HCT116 (cell line): ENCODE measurements at regions of chr17 and their contacts with region 1.

Region 1: GRCh38 chr17:9522074-9522473 is 53.5 kb downstream of the STX8 start:
- DNase-seq: no peak
- ATAC-seq: peak; percentile 81
- H3K4me3 ChIP-seq: no peak overlapping the region
- H3K27ac ChIP-seq: no peak overlapping the region
- H3K4me1 ChIP-seq: no peaks in the 10 kb centered on the region; a peak in 1 of 4 replicates
- H3K27me3 ChIP-seq: no peaks in the 10 kb centered on the region
- CTCF ChIP-seq: peak; percentile 31 to 62 (median 59)
- POLR2A ChIP-seq: no peak
- RAD21 ChIP-seq: peak; percentile 78

Region 2: GRCh38 chr17:8753976-8754440 is 768.1 kb before region 1 on chr17:
- CTCF ChIA-PET with region 1: interaction called, 3 read pairs
- POLR2A ChIA-PET with region 1: no interaction called
- RAD21 ChIA-PET with region 1: no interaction called
- intact Hi-C with region 1: loop called (anchors 5 kb)
- DNase-seq: peak; percentile 31
- ATAC-seq: peak; percentile 88
- H3K4me3 ChIP-seq: no peak overlapping the region
- H3K27ac ChIP-seq: no peak overlapping the region
- H3K4me1 ChIP-seq: no peaks in the 10 kb centered on the region
- H3K27me3 ChIP-seq: no peaks in the 10 kb centered on the region
- CTCF ChIP-seq: peak; percentile 50 to 73 (median 60); a peak in 5 of 6 replicates
- POLR2A ChIP-seq: no peak
- RAD21 ChIP-seq: peak; percentile 55; the same call in 1 of the 2 replicates

Region 3: DNA sequence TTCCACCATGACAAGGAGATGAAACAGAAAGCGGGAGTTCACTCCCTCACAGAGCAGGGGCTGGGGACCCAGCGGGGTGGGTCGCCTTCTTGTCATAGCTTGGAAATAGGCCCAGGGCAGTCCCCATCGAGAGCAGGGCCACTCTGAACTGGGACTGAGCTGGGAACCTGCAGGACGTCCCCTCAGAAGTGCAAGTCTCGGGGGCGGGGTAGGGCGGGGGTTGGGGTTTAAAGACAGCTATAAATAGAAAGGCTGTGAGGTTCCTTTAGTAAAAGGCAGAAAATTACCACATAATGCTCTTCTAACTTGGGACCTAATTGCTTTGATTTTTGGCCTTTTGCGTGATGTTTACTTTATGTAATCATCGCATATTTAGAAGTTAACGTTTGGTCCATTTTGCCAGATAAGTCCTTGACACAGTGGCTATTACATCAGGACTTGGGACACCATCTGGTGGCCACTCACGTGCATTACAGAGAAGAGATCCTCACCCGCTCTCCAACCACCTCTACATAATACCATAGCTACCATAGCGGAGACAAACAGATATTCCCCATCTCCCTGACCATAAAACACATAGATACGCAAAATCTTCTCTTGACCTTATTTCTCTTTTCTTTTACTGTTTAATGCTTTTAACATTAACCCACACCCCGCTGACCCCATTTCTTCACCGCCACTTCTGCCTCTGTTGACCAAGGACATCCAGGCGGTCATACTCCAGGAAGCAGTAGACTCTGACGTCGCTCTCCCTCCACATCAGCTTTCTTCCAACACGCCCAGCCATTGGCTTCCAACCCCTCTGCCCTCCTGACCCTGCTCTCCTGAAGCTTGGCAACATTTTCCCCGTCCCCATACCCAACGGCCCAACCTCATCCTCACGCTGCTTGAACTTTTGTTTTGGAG is 627.1 kb before region 1 on chr17:
- CTCF ChIA-PET with region 1: no interaction called
- POLR2A ChIA-PET with region 1: no interaction called
- RAD21 ChIA-PET with region 1: no interaction called
- intact Hi-C with region 1: loop called (anchors 10 kb)
- DNase-seq: peak; percentile 39
- ATAC-seq: peak; percentile 93
- H3K4me3 ChIP-seq: no peak overlapping the region
- H3K27ac ChIP-seq: no peak overlapping the region
- H3K4me1 ChIP-seq: peaks cover 0 to 5% of the 10 kb centered on the region in 2 experiments; a peak in 1 of 4 replicates
- H3K27me3 ChIP-seq: no peaks in the 10 kb centered on the region
- CTCF ChIP-seq: peak; percentile 57 to 80 (median 77); a peak in 5 of 6 replicates
- POLR2A ChIP-seq: no peak
- RAD21 ChIP-seq: peak; percentile 80

Region 4: GRCh38 chr17:8991514-8992285 is 530.4 kb before region 1 on chr17:
- CTCF ChIA-PET with region 1: interaction called, 11 read pairs
- POLR2A ChIA-PET with region 1: no interaction called
- RAD21 ChIA-PET with region 1: no interaction called
- intact Hi-C with region 1: loop called (anchors 1 kb)
- DNase-seq: peak; percentile 51
- ATAC-seq: peak; percentile 87
- H3K4me3 ChIP-seq: no peak overlapping the region
- H3K27ac ChIP-seq: no peak overlapping the region
- H3K4me1 ChIP-seq: no peaks in the 10 kb centered on the region
- H3K27me3 ChIP-seq: no peaks in the 10 kb centered on the region
- CTCF ChIP-seq: peak; percentile 64 to 92 (median 90)
- POLR2A ChIP-seq: no peak
- RAD21 ChIP-seq: peak; percentile 80

Region 5: DNA sequence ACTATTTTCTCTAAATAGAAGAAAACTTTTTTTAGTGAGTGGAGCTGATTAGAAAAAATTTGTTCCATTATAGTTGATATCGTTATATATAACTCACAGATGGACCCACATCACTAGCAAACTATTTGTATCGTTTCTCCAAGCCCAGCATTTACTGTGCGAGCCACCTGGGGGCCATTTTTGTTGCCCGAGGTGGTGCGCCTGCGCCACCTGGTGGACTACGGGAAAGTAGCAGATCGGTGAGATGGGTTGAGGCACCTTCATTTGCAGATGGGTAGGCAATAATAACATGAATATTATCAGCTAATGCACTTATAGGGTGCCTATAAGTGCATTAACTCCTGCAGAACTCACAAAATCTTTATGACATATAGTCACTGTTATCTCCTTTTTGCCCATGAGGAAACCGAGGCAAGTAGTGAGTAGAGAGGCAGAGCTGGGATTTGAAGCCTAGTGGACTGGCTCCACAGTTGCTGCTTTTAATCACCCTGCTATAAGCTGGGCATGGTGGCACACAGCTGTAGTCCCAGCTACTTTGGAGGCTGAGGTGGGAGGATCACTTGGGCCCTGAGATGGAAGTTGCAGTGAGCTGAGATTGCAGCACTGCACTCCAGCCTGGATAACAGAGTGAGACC is 524.0 kb before region 1 on chr17:
- CTCF ChIA-PET with region 1: interaction called, 39 read pairs
- POLR2A ChIA-PET with region 1: no interaction called
- RAD21 ChIA-PET with region 1: no interaction called
- intact Hi-C with region 1: loop called (anchors 1 kb)
- DNase-seq: peak; percentile 51
- ATAC-seq: peak; percentile 88
- H3K4me3 ChIP-seq: no peak overlapping the region
- H3K27ac ChIP-seq: no peak overlapping the region
- H3K4me1 ChIP-seq: peaks cover 0 to 4% of the 10 kb centered on the region in 2 experiments; a peak in 1 of 4 replicates
- H3K27me3 ChIP-seq: no peaks in the 10 kb centered on the region
- CTCF ChIP-seq: peak; percentile 98
- POLR2A ChIP-seq: no peak
- RAD21 ChIP-seq: peak; percentile 82

Region 6: DNA sequence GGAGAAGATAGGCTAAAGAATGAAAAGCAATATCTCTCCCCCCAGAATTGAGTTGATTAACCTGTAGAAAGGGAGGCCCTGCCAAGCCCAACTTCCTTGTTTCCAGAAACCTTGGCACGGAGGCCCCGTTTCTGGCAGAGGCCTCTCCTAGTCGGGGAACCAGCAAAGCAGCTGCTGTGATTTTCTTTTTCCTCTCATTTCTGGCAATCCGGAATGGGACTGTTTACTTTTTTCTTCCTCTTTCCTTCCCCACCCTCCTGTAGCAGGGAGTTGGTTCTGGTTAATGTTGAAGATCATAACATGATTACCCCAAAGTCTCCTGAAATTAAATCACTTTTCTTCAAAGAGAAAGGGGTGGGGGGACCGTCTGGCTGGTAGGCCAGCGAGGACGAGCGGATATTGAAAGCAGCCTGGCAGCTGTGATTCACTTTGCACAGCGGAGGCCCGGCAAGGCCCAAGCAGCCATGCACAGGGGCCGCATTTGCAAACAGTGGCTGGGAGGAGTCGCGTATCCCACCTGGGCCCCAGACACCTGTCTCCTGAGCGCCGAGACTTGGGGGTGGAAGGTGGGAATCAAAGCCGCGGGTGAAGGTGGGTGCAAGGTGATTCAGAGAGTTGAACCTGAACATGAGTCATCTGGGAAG is 449.3 kb before region 1 on chr17:
- CTCF ChIA-PET with region 1: no interaction called
- POLR2A ChIA-PET with region 1: no interaction called
- RAD21 ChIA-PET with region 1: no interaction called
- intact Hi-C with region 1: no loop called
- DNase-seq: no peak
- ATAC-seq: no peak
- H3K4me3 ChIP-seq: no peak overlapping the region
- H3K27ac ChIP-seq: no peak overlapping the region
- H3K4me1 ChIP-seq: peaks cover 5 to 27% of the 10 kb centered on the region in 2 experiments; a peak in 2 of 4 replicates
- H3K27me3 ChIP-seq: no peaks in the 10 kb centered on the region
- CTCF ChIP-seq: no peak
- POLR2A ChIP-seq: no peak
- RAD21 ChIP-seq: no peak

Region 7: GRCh38 chr17:9115446-9116191 is 406.5 kb before region 1 on chr17:
- CTCF ChIA-PET with region 1: no interaction called
- POLR2A ChIA-PET with region 1: no interaction called
- RAD21 ChIA-PET with region 1: no interaction called
- intact Hi-C with region 1: no loop called
- DNase-seq: no peak
- ATAC-seq: peak; percentile 40; the same call in 1 of the 2 replicates
- H3K4me3 ChIP-seq: no peak overlapping the region
- H3K27ac ChIP-seq: no peak overlapping the region
- H3K4me1 ChIP-seq: no peaks in the 10 kb centered on the region
- H3K27me3 ChIP-seq: no peaks in the 10 kb centered on the region
- CTCF ChIP-seq: no peak
- POLR2A ChIP-seq: no peak
- RAD21 ChIP-seq: 0 out of 2 replicates have a peak, but pooled peaks have one; percentile 3

Region 8: GRCh38 chr17:9291912-9292560 is 230.0 kb before region 1 on chr17:
- CTCF ChIA-PET with region 1: interaction called, 8 read pairs
- POLR2A ChIA-PET with region 1: no interaction called
- RAD21 ChIA-PET with region 1: no interaction called
- intact Hi-C with region 1: loop called (anchors 2 kb)
- DNase-seq: no peak
- ATAC-seq: peak; percentile 95
- H3K4me3 ChIP-seq: no peak overlapping the region
- H3K27ac ChIP-seq: no peak overlapping the region
- H3K4me1 ChIP-seq: peaks cover 0 to 8% of the 10 kb centered on the region in 2 experiments; a peak in 1 of 4 replicates
- H3K27me3 ChIP-seq: no peaks in the 10 kb centered on the region
- CTCF ChIP-seq: peak; percentile 34 to 75 (median 74); a peak in 5 of 6 replicates
- POLR2A ChIP-seq: no peak
- RAD21 ChIP-seq: peak; percentile 68

Region 9: DNA sequence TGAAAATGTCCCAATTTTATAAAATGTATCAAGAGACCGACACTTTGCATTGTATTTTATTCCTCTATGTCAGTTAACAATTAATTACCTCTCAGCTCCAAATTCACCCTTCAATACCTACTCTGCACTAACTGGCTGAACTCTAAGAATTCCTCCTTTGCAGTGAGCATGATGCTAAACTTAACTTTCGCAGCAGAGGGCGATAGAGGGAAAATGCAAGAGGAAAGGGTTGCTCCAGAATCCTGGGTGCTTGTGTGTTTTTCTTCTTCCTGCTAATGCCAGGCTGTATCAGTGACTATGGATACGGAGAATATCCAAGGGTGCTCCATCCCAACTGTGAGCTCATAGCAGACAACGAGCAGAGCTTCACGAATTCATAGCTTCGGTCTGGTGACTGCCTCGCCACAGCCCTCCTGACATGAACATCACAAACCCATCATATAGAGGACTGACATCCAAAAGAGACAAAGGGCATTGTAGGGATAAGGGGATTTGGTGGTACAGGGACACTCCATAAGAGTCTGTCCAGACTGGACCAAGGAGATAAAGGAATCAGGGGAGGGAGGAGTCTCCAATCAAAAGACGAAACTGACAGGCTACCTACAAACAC is 119.4 kb before region 1 on chr17:
- CTCF ChIA-PET with region 1: interaction called, 4 read pairs
- POLR2A ChIA-PET with region 1: no interaction called
- RAD21 ChIA-PET with region 1: no interaction called
- intact Hi-C with region 1: loop called (anchors 2 kb)
- DNase-seq: peak; percentile 16
- ATAC-seq: peak; percentile 81
- H3K4me3 ChIP-seq: no peak overlapping the region
- H3K27ac ChIP-seq: no peak overlapping the region
- H3K4me1 ChIP-seq: peaks cover 5 to 7% of the 10 kb centered on the region in 2 experiments; a peak in 3 of 4 replicates
- H3K27me3 ChIP-seq: no peaks in the 10 kb centered on the region
- CTCF ChIP-seq: peak; percentile 35 to 67 (median 64); a peak in 5 of 6 replicates
- POLR2A ChIP-seq: no peak
- RAD21 ChIP-seq: peak; percentile 47

Region 10: GRCh38 chr17:9959377-9959981 is 437.4 kb after region 1 on chr17:
- CTCF ChIA-PET with region 1: no interaction called
- POLR2A ChIA-PET with region 1: no interaction called
- RAD21 ChIA-PET with region 1: no interaction called
- intact Hi-C with region 1: no loop called
- DNase-seq: peak; percentile 28
- ATAC-seq: peak; percentile 94
- H3K4me3 ChIP-seq: no peak overlapping the region
- H3K27ac ChIP-seq: no peak overlapping the region
- H3K4me1 ChIP-seq: no peaks in the 10 kb centered on the region
- H3K27me3 ChIP-seq: peaks cover 13% of the 10 kb centered on the region; the same call in 1 of the 2 replicates
- CTCF ChIP-seq: peak; percentile 60 to 79 (median 77); a peak in 5 of 6 replicates
- POLR2A ChIP-seq: no peak
- RAD21 ChIP-seq: peak; percentile 46